Activated B cell treated with CpG ODN at 0.5 μM for 24 hours (primary cell): ENCODE measurements at regions of chr1 and their contacts with region 1.

Region 1: GRCh38 chr1:78004719-78005447 is at the start of gene DNAJB4:
- DNase-seq: no peak
- ATAC-seq: peak; percentile 94
- H3K4me3 Mint-ChIP-seq: peak within 1 kb of the TSS; percentile 92
- H3K27ac Mint-ChIP-seq: peak within 1 kb of the TSS; percentile 99
- H3K4me1 Mint-ChIP-seq: peaks cover 50% of the 10 kb centered on the region
- H3K27me3 Mint-ChIP-seq: peaks cover 2% of the 10 kb centered on the region
- CTCF ChIP-seq: no peak
- total RNA-seq, gene DNAJB4: 9.9 and 11.9 TPM in 2 replicates

Region 2: GRCh38 chr1:77219166-77219887 is 785.6 kb before region 1 on chr1 and contains the start of gene PIGK:
- CTCF ChIA-PET with region 1: no interaction called
- POLR2A ChIA-PET with region 1: interaction called, 4 read pairs
- intact Hi-C with region 1: loop called (anchors 10 kb)
- DNase-seq: peak; percentile 77
- ATAC-seq: peak; percentile 98
- H3K4me3 Mint-ChIP-seq: peak within 1 kb of the TSS; percentile 95
- H3K27ac Mint-ChIP-seq: peak within 1 kb of the TSS; percentile 89
- H3K4me1 Mint-ChIP-seq: peaks cover 26% of the 10 kb centered on the region
- H3K27me3 Mint-ChIP-seq: no peaks in the 10 kb centered on the region
- CTCF ChIP-seq: no peak
- total RNA-seq, gene PIGK: 10.8 and 11.1 TPM in 2 replicates

Region 3: DNA sequence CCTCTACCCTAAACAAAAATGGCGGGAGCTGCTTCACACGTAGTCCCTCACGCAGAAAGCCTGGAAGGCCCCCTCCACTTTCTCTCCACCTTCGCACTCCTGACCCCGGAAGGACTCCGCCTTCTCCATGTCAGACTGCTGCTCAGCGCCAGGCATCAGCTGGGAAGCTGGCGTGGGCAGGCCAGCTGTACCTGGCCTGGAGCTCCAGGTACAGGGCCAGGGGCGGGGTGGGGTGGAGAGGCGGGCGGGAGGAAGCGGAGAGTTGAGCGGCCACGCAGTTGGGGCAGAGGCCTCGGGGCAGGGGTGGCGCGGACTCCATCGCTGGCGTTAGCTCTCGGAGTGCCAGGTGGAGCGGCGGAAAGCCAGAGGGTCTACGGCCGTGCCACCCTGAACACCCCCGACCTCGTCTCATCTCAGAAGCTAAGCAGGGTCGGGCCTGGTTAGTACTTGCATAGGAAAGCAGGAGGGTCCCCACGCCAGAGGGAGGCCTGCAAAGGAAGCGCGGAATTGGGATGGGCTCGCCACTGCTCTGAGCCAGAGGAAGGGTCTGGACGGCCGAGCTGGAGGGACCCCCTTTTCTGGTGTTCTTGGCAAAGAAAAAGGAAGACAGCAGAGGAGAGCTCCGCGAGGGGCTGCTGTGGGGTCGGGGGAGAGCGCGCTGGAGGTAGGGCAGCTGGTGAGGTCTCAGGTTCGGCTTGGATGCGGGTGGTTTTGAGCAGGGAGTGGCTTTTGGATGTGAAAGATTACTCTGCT is 225.2 kb before region 1 on chr1 and contains the start of gene MIGA1:
- CTCF ChIA-PET with region 1: no interaction called
- POLR2A ChIA-PET with region 1: interaction called, 17 read pairs
- intact Hi-C with region 1: loop called (anchors 1 kb)
- DNase-seq: peak; percentile 69
- ATAC-seq: peak; percentile 96
- H3K4me3 Mint-ChIP-seq: peak within 1 kb of the TSS; percentile 92
- H3K27ac Mint-ChIP-seq: peak within 1 kb of the TSS; percentile 82
- H3K4me1 Mint-ChIP-seq: peaks cover 28% of the 10 kb centered on the region
- H3K27me3 Mint-ChIP-seq: no peaks in the 10 kb centered on the region
- CTCF ChIP-seq: no peak
- total RNA-seq, gene MIGA1: 11.1 and 13.0 TPM in 2 replicates

Region 4: DNA sequence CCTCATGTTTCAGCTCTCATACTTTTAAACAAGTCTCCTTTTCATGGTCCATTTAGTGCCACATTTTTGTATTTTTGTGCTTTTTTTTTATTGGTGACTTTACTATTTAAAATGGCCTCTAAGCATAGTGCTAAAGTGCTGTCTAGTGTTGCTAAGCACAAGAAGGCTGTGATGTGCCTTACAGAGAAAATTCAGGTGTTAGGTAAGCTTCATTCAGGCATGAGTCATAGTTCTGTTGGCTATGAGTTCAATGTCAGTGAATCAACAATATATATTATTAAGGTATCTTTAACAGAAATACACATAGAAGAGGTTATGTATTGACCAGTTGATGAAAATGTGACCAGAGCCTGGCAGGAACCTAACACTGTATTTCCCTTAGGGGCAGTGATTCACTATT is 13.2 kb before region 1 on chr1:
- CTCF ChIA-PET with region 1: no interaction called
- POLR2A ChIA-PET with region 1: interaction called, 9 read pairs
- intact Hi-C with region 1: loop called (anchors 1 kb)
- DNase-seq: no peak
- ATAC-seq: no peak
- H3K4me3 Mint-ChIP-seq: no peak overlapping the region
- H3K27ac Mint-ChIP-seq: no peak overlapping the region
- H3K4me1 Mint-ChIP-seq: peaks cover 2% of the 10 kb centered on the region
- H3K27me3 Mint-ChIP-seq: no peaks in the 10 kb centered on the region
- CTCF ChIP-seq: no peak

Region 5: GRCh38 chr1:78145105-78145580 is 140.3 kb after region 1 on chr1:
- CTCF ChIA-PET with region 1: no interaction called
- POLR2A ChIA-PET with region 1: interaction called, 11 read pairs
- intact Hi-C with region 1: no loop called
- DNase-seq: no peak
- ATAC-seq: peak; percentile 67
- H3K4me3 Mint-ChIP-seq: no peak overlapping the region
- H3K27ac Mint-ChIP-seq: no peak overlapping the region
- H3K4me1 Mint-ChIP-seq: peaks cover 28% of the 10 kb centered on the region
- H3K27me3 Mint-ChIP-seq: peaks cover 9% of the 10 kb centered on the region
- CTCF ChIP-seq: peak; percentile 86